Activated naive CD4-positive, alpha-beta T cell treated with anti-CD3 and anti-CD28 coated beads for 36 hours (primary cell): ENCODE measurements at regions of chr7 and their contacts with region 1.

Region 1: DNA sequence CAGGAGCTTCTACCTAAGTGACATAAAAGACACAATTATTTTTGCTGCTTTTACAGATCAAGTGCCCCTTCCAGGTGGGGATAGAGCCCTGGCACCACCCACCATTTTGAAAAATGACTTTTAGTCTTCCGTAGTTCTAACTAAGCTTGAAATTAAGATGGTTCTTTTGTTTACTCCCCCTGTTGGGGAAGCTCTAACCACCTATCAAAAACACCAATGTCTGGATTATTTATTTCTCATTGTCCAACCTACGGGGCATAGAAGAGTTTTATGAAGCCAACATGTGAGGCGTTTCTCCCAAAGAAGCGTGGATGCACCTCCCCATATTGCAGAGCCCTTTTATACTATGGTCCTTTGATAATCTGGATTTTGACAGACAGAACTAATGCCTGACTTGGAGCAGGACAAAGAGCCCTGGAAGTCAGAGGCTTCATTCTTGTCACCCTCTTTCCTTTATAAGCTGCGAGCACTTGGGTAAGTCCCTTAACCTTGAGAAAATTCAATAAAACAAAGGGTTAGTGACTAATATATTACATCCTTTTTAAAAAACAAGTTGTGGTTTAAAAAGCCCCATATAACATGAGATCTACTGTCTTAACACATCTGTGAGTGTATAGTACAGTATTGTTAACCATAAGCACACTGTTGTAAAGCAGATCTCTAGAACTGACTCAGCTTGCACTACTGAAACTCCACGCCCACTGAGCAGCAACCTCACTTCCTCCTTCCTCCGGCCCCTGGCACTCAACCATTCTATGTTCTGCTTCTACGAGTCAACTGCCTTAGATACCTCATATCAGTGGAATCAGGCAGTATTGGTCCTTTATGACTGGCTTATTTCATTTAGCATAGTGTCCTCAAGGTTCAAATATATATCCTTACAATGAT is 67.5 kb downstream of the ATXN7L1 start:
- DNase-seq: peak; percentile 96
- H3K4me3 Mint-ChIP-seq: no peak overlapping the region
- H3K27ac Mint-ChIP-seq: peak overlapping the region; percentile 38
- H3K4me1 Mint-ChIP-seq: peaks cover 58% of the 10 kb centered on the region
- H3K27me3 Mint-ChIP-seq: peaks cover 3% of the 10 kb centered on the region

Region 2: DNA sequence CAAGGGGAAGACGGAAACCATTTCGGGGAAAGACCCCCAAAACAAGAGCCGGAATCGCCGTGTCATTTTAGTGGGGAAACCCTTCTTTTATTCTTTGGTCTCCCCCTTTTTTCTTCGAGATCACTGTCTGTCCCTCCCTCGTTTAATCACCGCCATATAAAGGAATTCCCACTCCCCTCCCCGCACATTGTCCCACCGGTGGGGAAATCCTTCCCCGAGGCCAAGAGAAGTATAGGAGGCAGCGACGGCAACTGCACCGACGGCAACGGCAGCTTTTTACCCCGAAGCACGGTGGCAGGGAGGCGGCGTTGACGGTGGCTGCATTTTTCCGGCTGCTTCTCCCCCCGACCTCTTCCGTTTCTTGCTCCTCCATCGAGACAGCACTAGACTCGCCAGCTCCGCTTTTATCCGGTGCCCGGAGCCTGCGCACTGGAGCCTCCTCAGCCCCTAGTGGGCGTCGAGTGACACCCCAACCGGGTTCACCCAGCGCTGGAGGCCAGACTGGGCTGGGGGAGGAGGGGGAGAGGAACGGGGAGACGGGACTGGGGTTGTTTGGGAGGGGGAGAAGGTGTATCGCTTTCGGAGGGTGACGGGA is 795.6 kb before region 1 on chr7:
- CTCF ChIA-PET with region 1: no interaction called
- intact Hi-C with region 1: loop called (anchors 5 kb)
- DNase-seq: peak; percentile 94
- H3K4me3 Mint-ChIP-seq: peak overlapping the region; percentile 95
- H3K27ac Mint-ChIP-seq: peak overlapping the region; percentile 99
- H3K4me1 Mint-ChIP-seq: peaks cover 25% of the 10 kb centered on the region
- H3K27me3 Mint-ChIP-seq: no peaks in the 10 kb centered on the region

Region 3: GRCh38 chr7:105531792-105532671 is 276.9 kb before region 1 on chr7 and contains the start of gene RINT1:
- CTCF ChIA-PET with region 1: no interaction called
- intact Hi-C with region 1: loop called (anchors 5 kb)
- DNase-seq: peak; percentile 95
- H3K4me3 Mint-ChIP-seq: peak within 1 kb of the TSS; percentile 83
- H3K27ac Mint-ChIP-seq: peak within 1 kb of the TSS; percentile 85
- H3K4me1 Mint-ChIP-seq: peaks cover 23% of the 10 kb centered on the region
- H3K27me3 Mint-ChIP-seq: no peaks in the 10 kb centered on the region
- total RNA-seq, gene RINT1: 22.1 to 25.2 TPM

Region 4: GRCh38 chr7:105849122-105849855 is 40.3 kb after region 1 on chr7:
- CTCF ChIA-PET with region 1: no interaction called
- intact Hi-C with region 1: loop called (anchors 1 kb)
- DNase-seq: peak; percentile 83
- H3K4me3 Mint-ChIP-seq: no peak overlapping the region
- H3K27ac Mint-ChIP-seq: no peak overlapping the region
- H3K4me1 Mint-ChIP-seq: peaks cover 44% of the 10 kb centered on the region
- H3K27me3 Mint-ChIP-seq: no peaks in the 10 kb centered on the region

Region 5: GRCh38 chr7:106009403-106010226 is 200.7 kb after region 1 on chr7:
- CTCF ChIA-PET with region 1: interaction called, 3 read pairs
- intact Hi-C with region 1: loop called (anchors 1 kb)
- DNase-seq: peak; percentile 89
- H3K4me3 Mint-ChIP-seq: no peak overlapping the region
- H3K27ac Mint-ChIP-seq: no peak overlapping the region
- H3K4me1 Mint-ChIP-seq: peaks cover 22% of the 10 kb centered on the region
- H3K27me3 Mint-ChIP-seq: no peaks in the 10 kb centered on the region

Region 6: DNA sequence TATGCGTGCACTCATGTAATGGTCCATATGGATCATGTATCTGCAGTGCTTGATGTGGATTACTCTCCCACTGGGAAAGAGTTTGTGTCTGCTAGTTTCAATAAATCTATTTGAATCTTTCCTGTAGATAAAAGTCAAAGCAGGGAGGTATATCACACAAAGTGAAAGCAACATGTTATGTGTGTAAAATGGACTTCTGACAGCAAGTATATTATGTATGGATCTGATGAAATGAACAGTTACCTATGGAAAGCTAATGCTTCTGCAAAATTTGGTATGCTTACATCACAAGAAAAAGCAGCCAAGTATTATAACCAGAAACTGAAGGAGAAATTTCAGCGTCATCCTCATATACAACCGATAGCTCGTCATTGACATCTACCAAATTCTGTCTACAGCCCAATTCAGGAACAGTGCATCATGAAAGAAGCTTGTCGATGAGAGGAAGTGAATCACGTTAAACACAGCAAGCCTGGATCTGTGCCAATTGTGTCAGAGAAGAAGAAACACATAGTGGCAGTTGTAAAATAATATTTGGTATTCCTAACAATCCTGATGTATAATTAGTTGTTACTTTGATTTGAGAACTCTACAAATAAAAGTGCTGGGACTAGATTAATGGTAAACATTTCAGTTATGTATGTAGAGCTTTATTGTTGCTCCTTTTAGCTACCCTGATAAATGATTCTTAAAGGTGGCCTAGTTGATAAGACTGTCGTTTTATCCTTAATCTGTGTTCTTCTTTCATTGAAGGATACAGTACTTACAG is 317.4 kb after region 1 on chr7:
- CTCF ChIA-PET with region 1: no interaction called
- intact Hi-C with region 1: no loop called
- DNase-seq: peak; percentile 85
- H3K4me3 Mint-ChIP-seq: peak overlapping the region; percentile 68
- H3K27ac Mint-ChIP-seq: peak overlapping the region; percentile 20
- H3K4me1 Mint-ChIP-seq: peaks cover 18% of the 10 kb centered on the region
- H3K27me3 Mint-ChIP-seq: no peaks in the 10 kb centered on the region

Region 7: DNA sequence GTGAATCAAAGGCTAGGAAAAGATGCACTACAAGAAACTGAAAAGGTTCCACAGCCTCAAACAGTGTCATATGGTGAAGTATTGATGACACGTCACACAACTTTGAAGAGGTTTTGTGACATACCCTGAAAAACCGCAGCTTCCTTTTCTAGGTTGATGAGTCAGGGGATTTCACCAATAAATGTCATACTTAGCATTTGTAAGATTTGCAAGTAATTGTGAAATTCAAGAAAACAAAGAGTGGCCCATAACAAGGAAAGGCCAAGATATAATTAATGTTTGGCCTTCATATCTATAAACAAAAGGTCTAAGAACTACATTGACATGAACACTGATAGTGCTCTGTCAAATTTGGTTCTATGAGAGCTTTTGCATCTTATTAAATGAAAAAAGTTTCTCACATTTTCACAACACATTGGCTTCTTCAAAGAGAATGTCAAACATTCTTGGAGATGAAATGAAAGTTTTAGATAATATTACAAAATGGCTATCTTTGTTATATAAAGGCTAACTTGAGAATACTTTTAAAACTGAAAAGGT is 537.8 kb after region 1 on chr7:
- CTCF ChIA-PET with region 1: no interaction called
- intact Hi-C with region 1: loop called (anchors 1 kb)
- DNase-seq: peak; percentile 75
- H3K4me3 Mint-ChIP-seq: peak overlapping the region; percentile 15
- H3K27ac Mint-ChIP-seq: peak overlapping the region; percentile 97
- H3K4me1 Mint-ChIP-seq: peaks cover 55% of the 10 kb centered on the region
- H3K27me3 Mint-ChIP-seq: peaks cover 6% of the 10 kb centered on the region

Region 8: DNA sequence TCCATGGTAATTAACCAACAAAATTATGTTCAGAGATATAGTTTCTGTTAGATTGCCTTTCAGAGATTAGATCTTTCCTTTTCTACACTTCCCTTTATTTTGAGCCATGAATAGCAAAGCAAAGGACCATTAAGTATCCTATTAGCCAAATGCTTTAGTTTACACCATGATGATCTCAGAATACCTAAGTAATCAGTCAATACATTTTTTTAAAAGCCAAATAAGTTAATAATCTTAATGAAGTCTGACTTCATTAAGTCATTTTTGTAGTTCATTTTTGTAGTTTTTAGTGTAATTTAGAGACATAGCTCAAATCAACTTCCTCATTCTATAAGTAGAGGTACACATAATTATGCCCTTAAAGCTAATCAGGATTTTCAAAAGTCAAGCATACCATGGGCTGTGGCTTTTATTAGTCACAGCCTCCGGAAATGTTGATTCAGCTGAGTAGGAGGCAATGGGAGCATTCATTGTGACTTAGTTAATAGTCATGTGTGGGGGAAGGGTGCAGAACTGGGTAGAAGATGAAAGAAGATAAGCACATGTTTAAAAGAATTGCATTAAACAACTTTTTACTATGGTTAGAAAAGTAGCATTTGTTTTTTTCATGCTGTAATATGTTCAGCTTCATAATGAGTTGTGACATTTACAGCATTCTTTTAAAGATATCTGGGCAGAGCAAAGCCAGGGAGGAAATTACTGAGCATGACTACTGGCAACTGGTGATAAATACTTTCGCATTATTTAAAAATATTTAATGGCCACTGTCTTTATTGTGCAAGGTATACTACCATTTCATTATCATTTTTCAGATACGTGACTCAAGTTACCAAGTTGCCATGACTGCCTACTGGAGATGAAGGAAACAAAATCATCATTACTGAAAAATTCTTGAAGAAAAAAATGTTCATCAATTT is 909.3 kb after region 1 on chr7:
- CTCF ChIA-PET with region 1: no interaction called
- intact Hi-C with region 1: loop called (anchors 5 kb)
- DNase-seq: peak; percentile 92
- H3K4me3 Mint-ChIP-seq: no peak overlapping the region
- H3K27ac Mint-ChIP-seq: no peak overlapping the region
- H3K4me1 Mint-ChIP-seq: peaks cover 10% of the 10 kb centered on the region
- H3K27me3 Mint-ChIP-seq: no peaks in the 10 kb centered on the region